ENCODE measurements at regions of chr1 and their contacts with region 1.

Region 1: GRCh38 chr1:234486498-234487448 is 7.8 kb upstream of the TARBP1 start:
- DNase-seq: peak; percentile 87
- H3K4me3 Mint-ChIP-seq: no peak overlapping the region
- H3K27ac Mint-ChIP-seq: no peak overlapping the region
- H3K4me1 Mint-ChIP-seq: peaks cover 15% of the 10 kb centered on the region
- H3K27me3 Mint-ChIP-seq: peaks cover 20% of the 10 kb centered on the region
- CTCF ChIP-seq: peak; percentile 96

Region 2: GRCh38 chr1:234235434-234235881 is 251.3 kb before region 1 on chr1:
- CTCF ChIA-PET with region 1: no interaction called
- POLR2A ChIA-PET with region 1: no interaction called
- intact Hi-C with region 1: no loop called
- DNase-seq: no peak
- H3K4me3 Mint-ChIP-seq: no peak overlapping the region
- H3K27ac Mint-ChIP-seq: no peak overlapping the region
- H3K4me1 Mint-ChIP-seq: peaks cover 10% of the 10 kb centered on the region
- H3K27me3 Mint-ChIP-seq: no peaks in the 10 kb centered on the region
- CTCF ChIP-seq: no peak

Region 3: DNA sequence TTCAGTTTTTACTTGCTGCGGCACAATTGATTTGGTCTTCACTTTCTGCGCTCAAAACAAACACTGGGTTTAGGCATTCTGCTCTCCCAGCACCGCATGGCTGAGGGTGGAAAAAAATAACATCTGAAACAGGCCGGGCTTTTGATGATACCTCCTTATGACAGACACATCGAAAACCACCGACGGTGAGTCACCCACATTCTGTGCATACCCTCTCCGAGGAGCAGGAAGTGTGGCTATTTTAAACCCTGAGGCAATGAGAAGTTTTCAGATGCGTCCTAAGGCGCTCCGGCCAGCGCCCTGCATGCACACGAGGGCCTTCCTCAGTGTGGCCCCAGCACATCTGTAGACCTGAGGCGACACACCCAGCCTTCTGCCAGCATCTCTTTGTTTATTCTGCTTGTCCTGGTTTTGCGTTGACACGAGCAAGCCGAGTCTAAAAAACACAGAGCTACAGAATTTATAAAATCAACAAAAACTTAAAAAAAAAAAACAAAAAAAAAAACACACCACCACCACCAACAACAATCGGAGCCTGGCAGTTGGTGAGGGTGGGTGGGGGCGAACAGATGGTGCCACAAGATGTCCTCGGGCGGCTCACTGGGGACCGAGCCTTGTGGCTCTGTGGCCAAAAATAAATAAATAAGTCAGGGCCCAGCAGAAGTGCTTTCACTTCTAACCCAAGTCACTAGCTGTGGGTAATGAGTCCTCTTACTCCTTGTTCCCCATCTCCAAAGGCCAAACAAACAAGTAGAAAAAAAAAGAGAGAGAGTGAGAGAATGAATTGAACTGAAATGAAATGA is 285.8 kb after region 1 on chr1:
- CTCF ChIA-PET with region 1: interaction called, 3 read pairs
- POLR2A ChIA-PET with region 1: no interaction called
- intact Hi-C with region 1: loop called (anchors 1 kb)
- DNase-seq: peak; percentile 100
- H3K4me3 Mint-ChIP-seq: peak overlapping the region; percentile 51
- H3K27ac Mint-ChIP-seq: peak overlapping the region; percentile 95
- H3K4me1 Mint-ChIP-seq: peaks cover 29% of the 10 kb centered on the region
- H3K27me3 Mint-ChIP-seq: no peaks in the 10 kb centered on the region
- CTCF ChIP-seq: no peak

Region 4: GRCh38 chr1:235060607-235061470 is 574.1 kb after region 1 on chr1:
- CTCF ChIA-PET with region 1: interaction called, 13 read pairs
- POLR2A ChIA-PET with region 1: no interaction called
- intact Hi-C with region 1: loop called (anchors 1 kb)
- DNase-seq: peak; percentile 76
- H3K4me3 Mint-ChIP-seq: no peak overlapping the region
- H3K27ac Mint-ChIP-seq: no peak overlapping the region
- H3K4me1 Mint-ChIP-seq: peaks cover 38% of the 10 kb centered on the region
- H3K27me3 Mint-ChIP-seq: no peaks in the 10 kb centered on the region
- CTCF ChIP-seq: no peak

Region 5: DNA sequence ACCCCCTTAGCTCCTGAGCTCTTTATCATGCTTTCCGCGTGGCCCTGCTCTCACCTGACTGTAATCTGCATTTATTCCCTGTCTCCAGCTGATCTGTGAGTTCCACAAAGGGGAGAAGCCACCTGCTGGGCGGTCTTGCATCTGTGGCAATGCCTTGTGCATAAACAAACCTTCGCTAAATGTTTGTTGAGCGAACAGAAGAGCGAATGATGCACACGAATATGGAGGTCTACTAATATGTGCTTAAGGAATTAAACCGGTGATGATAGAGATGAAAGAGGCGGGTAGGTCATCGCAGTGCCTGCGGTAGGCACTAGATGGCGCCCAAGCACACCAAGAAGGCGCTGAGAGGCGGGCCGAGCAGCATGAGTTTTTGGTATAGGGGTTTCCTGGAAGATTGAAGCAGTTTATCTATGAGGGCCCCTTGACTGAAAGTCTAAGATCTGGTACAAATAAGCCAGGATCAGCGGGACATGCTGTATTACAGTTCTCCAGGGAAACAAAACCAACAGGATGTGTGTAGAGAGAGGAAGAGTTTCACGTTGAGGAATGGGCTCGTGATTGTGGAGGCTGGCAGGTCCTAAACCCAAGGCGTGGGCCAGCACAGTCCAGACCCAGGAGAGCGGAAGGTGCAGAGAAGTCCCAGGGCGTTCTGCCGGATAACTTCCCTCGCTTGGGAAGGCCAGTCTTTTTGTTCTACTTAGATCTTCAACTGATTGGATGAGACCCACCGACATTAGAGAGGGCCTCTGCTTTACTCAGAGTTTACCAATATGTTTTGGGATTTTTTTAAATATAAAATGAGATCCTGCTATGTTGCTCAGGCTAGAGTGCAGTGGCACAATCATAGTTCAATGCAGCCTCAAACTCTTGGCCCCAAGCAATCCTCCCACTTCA is 607.2 kb after region 1 on chr1:
- CTCF ChIA-PET with region 1: interaction called, 60 read pairs
- POLR2A ChIA-PET with region 1: interaction called, 6 read pairs
- intact Hi-C with region 1: no loop called
- DNase-seq: peak; percentile 83
- H3K4me3 Mint-ChIP-seq: no peak overlapping the region
- H3K27ac Mint-ChIP-seq: no peak overlapping the region
- H3K4me1 Mint-ChIP-seq: peaks cover 6% of the 10 kb centered on the region
- H3K27me3 Mint-ChIP-seq: no peaks in the 10 kb centered on the region
- CTCF ChIP-seq: peak; percentile 100

Region 6: GRCh38 chr1:235105051-235106043 is 618.6 kb after region 1 on chr1:
- CTCF ChIA-PET with region 1: interaction called, 14 read pairs
- POLR2A ChIA-PET with region 1: interaction called, 3 read pairs
- intact Hi-C with region 1: loop called (anchors 1 kb)
- DNase-seq: peak; percentile 51
- H3K4me3 Mint-ChIP-seq: peak overlapping the region; percentile 59
- H3K27ac Mint-ChIP-seq: peak overlapping the region; percentile 33
- H3K4me1 Mint-ChIP-seq: peaks cover 29% of the 10 kb centered on the region
- H3K27me3 Mint-ChIP-seq: no peaks in the 10 kb centered on the region
- CTCF ChIP-seq: no peak

Region 7: GRCh38 chr1:235122348-235122747 is 635.6 kb after region 1 on chr1:
- CTCF ChIA-PET with region 1: interaction called, 10 read pairs
- POLR2A ChIA-PET with region 1: no interaction called
- intact Hi-C with region 1: no loop called
- DNase-seq: no peak
- H3K4me3 Mint-ChIP-seq: no peak overlapping the region
- H3K27ac Mint-ChIP-seq: peak overlapping the region; percentile 56
- H3K4me1 Mint-ChIP-seq: peaks cover 45% of the 10 kb centered on the region
- H3K27me3 Mint-ChIP-seq: no peaks in the 10 kb centered on the region
- CTCF ChIP-seq: no peak